OCI-LY7 (cell line): ENCODE measurements at regions of chr1 and their contacts with region 1.

Region 1: GRCh38 chr1:68162761-68163160 is 69.6 kb downstream of the WLS start:
- DNase-seq: no peak
- H3K4me3 ChIP-seq: no peak overlapping the region
- H3K27ac ChIP-seq: no peak overlapping the region
- H3K4me1 ChIP-seq: peaks cover 14% of the 10 kb centered on the region
- CTCF ChIP-seq: peak; percentile 43

Region 2: DNA sequence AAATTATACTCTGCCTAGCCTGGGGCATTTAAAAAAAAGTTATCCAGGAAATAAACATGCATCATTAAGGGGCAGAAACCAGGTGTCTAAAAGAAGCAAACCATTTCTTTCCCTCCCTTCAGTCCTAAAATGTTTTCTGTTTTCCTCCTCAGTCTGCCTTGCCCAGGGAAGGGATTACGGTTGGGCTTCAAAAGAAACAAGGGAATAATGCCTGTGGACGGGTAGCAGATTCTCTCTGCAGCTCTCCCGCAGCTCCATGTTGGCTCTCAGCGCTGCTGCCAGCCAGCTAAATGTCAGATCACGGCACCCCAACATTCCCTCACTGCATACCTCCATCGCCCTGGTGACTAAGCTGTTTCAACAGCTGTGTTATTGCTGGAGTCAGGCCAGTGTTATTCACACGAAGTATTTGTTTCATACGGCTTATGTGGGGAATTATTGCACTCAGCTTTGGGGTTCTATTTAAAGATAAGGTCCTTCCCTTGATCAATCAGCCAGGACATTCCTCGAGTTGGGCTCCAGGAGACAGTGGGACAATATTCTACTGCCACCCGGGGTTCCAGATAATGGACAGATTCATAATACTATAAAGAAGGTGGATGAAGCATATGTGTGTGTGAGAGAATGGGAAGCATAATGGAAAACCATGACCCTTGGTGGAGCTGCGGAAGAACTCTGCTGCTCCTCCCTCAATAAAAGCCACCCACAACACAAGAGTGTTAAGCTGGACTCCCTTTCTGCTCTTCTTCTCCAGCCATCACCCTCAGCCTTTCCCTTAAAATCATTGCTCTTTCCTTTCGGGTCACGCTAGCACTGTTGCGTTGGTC is 11.4 kb after region 1 on chr1:
- CTCF ChIA-PET with region 1: no interaction called
- POLR2A ChIA-PET with region 1: interaction called, 17 read pairs
- intact Hi-C with region 1: no loop called
- DNase-seq: no peak
- H3K4me3 ChIP-seq: no peak overlapping the region
- H3K27ac ChIP-seq: no peak overlapping the region
- H3K4me1 ChIP-seq: no peaks in the 10 kb centered on the region
- CTCF ChIP-seq: no peak